ENCODE measurements at regions of chr10 and their contacts with region 1.

Region 1: GRCh38 chr10:119207367-119207668 is at the start of gene GRK5:
- DNase-seq: peak; percentile 90 to 99 (median 96)
- ATAC-seq: peak; percentile 81
- H3K4me3 ChIP-seq: peak within 1 kb of the TSS; percentile 62 to 77
- H3K4me3 Mint-ChIP-seq: peak within 1 kb of the TSS; percentile 99
- H3K27ac ChIP-seq: peak within 1 kb of the TSS; percentile 57 to 74
- H3K27ac Mint-ChIP-seq: peak within 1 kb of the TSS; percentile 95
- H3K4me1 ChIP-seq: peaks cover 36% of the 10 kb centered on the region
- H3K4me1 Mint-ChIP-seq: peaks cover 44% of the 10 kb centered on the region
- H3K27me3 ChIP-seq: no peaks in the 10 kb centered on the region
- H3K27me3 Mint-ChIP-seq: no peaks in the 10 kb centered on the region
- CTCF ChIP-seq: no peak
- total RNA-seq, gene GRK5: 15.6 to 16.2 TPM

Region 2: DNA sequence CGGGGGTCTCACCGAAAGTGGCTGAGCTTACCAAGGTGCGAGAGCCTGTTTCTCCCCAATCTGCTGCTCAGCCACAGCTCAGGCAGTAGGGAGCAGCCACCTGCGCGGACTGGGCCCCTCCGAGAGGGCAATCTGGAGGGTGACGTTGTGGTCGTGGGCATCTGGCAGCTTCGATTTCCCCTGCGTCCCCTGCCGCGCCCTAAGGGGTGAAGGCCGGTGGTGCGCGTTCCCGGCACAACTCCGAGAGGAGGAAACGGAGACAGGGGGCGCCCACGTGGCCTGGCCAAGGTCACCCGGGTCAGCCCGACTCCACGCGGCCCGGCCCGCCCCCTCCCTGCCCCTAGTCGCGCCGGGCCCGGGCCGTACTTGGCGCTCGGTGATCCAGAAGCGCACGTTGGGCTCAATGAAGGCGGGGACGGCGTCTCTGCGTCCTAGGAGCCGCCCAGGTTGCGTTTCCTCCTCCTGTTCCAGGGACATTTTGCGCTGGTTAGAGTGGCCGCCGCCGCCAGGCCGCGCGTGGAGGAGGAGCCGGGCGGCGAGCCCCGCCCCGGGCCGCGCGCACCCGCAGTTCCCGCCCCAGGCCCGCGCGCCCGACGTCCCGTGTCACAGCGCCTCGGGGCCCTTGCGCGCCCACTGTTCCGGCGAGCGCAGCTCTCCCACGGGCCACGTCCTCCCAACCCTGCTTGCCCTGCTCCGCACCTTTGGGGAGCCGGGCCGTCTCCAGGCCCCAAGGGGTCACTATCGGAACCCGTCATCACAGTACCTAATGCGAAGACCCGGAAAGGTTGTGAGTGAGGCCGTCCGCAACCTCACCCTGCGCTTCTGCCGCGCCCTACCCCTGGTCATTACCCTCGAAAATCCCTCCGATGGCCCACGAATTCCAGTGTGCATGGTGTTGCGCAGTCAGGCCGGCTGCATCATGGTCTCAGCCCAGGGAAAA is 41.9 kb before region 1 on chr10 and contains the start of gene SFXN4:
- CTCF ChIA-PET with region 1: interaction called, 6 read pairs
- POLR2A ChIA-PET with region 1: interaction called, 4 read pairs
- intact Hi-C with region 1: loop called (anchors 1 to 2 kb)
- DNase-seq: peak; percentile 59 to 89 (median 77)
- ATAC-seq: peak; percentile 93
- H3K4me3 ChIP-seq: peak within 1 kb of the TSS; percentile 49 to 80
- H3K4me3 Mint-ChIP-seq: peak within 1 kb of the TSS; percentile 95
- H3K27ac ChIP-seq: peak within 1 kb of the TSS; percentile 61 to 71
- H3K27ac Mint-ChIP-seq: peak within 1 kb of the TSS; percentile 96
- H3K4me1 ChIP-seq: peaks cover 18% of the 10 kb centered on the region
- H3K4me1 Mint-ChIP-seq: peaks cover 34% of the 10 kb centered on the region
- H3K27me3 ChIP-seq: no peaks in the 10 kb centered on the region
- H3K27me3 Mint-ChIP-seq: no peaks in the 10 kb centered on the region
- CTCF ChIP-seq: no peak
- total RNA-seq, gene SFXN4: 10.5 to 10.8 TPM

Region 3: GRCh38 chr10:119268871-119269506 is 61.7 kb after region 1 on chr10:
- CTCF ChIA-PET with region 1: interaction called, 8 read pairs
- POLR2A ChIA-PET with region 1: no interaction called
- intact Hi-C with region 1: loop called (anchors 1 kb)
- DNase-seq: peak; percentile 45 to 97 (median 75)
- ATAC-seq: peak; percentile 90
- H3K4me3 ChIP-seq: no peak overlapping the region
- H3K4me3 Mint-ChIP-seq: peak overlapping the region; percentile 33
- H3K27ac ChIP-seq: peak overlapping the region; percentile 68 to 100
- H3K27ac Mint-ChIP-seq: peak overlapping the region; percentile 97
- H3K4me1 ChIP-seq: peaks cover 42% of the 10 kb centered on the region
- H3K4me1 Mint-ChIP-seq: peaks cover 52% of the 10 kb centered on the region
- H3K27me3 ChIP-seq: no peaks in the 10 kb centered on the region
- H3K27me3 Mint-ChIP-seq: no peaks in the 10 kb centered on the region
- CTCF ChIP-seq: no peak

Region 4: DNA sequence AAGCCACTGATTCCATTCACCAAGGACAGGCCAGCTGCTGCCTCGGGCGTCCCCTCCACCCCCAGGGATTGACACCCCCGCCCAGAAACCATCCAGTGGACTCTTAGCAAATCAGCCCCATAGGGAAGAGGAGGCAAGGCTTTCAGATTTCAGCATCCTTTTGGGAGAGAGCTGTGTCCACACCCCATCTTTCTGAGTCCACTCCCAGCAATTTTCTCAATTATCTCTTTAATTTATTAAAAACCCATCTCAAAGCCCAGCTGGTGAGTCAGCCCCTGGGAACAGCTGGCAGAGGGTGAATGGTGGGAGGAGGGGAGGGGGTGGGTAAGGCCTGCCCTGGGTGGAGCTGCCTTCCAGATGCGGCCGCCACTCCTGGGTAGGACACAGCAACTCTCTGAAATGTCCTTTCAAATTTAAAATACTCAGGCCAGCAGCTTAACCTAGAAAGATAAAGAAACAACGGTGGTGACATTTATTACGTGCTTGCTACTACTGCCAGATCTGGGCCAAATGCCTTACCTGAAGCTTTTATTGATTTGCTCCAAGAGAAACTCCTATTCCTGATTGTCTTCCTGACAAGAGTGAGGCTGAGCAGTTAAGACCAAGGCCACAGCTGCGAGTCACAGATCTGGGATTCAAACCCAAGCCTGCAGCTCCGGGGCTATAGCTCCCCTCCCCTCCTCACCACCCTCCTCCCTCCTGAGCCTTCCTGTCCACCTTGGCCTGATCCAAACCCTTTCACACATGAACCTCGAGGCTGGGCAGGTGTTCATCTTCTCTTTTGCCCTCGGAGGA is 214.8 kb after region 1 on chr10:
- CTCF ChIA-PET with region 1: interaction called, 86 read pairs
- POLR2A ChIA-PET with region 1: interaction called, 9 read pairs
- intact Hi-C with region 1: loop called in 1 of 2 experiments (anchors 1 kb)
- DNase-seq: no peak
- ATAC-seq: no peak
- H3K4me3 ChIP-seq: no peak overlapping the region
- H3K4me3 Mint-ChIP-seq: no peak overlapping the region
- H3K27ac ChIP-seq: no peak overlapping the region
- H3K27ac Mint-ChIP-seq: no peak overlapping the region
- H3K4me1 ChIP-seq: no peaks in the 10 kb centered on the region
- H3K4me1 Mint-ChIP-seq: no peaks in the 10 kb centered on the region
- H3K27me3 ChIP-seq: no peaks in the 10 kb centered on the region
- H3K27me3 Mint-ChIP-seq: no peaks in the 10 kb centered on the region
- CTCF ChIP-seq: no peak

Region 5: DNA sequence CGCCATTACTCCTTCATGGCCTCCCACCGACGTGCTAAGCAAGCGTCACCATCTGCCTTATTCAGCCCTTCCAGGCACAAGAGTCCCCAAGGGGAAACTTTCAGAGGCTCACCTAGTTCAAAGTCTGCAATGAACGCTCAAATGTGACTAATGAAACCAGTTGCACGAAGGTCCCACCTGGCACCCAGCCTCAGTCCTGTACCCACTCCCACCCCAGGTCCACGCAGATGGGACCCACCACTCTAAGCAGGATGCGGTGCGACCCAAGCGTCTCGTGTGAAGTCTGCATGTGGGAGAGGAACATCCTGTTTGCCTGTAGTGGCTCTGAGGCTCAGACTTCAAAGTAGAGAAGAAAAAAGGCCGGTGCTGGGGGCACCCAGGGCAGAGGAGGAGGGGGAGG is 294.9 kb after region 1 on chr10:
- CTCF ChIA-PET with region 1: interaction called, 3 read pairs
- POLR2A ChIA-PET with region 1: interaction called, 3 read pairs
- intact Hi-C with region 1: loop called in 1 of 2 experiments (anchors 5 kb)
- DNase-seq: peak; percentile 64 to 97 (median 88)
- ATAC-seq: peak; percentile 82
- H3K4me3 ChIP-seq: peak overlapping the region; percentile 0 to 18
- H3K4me3 Mint-ChIP-seq: peak overlapping the region; percentile 79
- H3K27ac ChIP-seq: peak overlapping the region; percentile 73 to 77
- H3K27ac Mint-ChIP-seq: peak overlapping the region; percentile 99
- H3K4me1 ChIP-seq: peaks cover 94% of the 10 kb centered on the region
- H3K4me1 Mint-ChIP-seq: peaks cover 91% of the 10 kb centered on the region
- H3K27me3 ChIP-seq: no peaks in the 10 kb centered on the region
- H3K27me3 Mint-ChIP-seq: no peaks in the 10 kb centered on the region
- CTCF ChIP-seq: no peak

Region 6: DNA sequence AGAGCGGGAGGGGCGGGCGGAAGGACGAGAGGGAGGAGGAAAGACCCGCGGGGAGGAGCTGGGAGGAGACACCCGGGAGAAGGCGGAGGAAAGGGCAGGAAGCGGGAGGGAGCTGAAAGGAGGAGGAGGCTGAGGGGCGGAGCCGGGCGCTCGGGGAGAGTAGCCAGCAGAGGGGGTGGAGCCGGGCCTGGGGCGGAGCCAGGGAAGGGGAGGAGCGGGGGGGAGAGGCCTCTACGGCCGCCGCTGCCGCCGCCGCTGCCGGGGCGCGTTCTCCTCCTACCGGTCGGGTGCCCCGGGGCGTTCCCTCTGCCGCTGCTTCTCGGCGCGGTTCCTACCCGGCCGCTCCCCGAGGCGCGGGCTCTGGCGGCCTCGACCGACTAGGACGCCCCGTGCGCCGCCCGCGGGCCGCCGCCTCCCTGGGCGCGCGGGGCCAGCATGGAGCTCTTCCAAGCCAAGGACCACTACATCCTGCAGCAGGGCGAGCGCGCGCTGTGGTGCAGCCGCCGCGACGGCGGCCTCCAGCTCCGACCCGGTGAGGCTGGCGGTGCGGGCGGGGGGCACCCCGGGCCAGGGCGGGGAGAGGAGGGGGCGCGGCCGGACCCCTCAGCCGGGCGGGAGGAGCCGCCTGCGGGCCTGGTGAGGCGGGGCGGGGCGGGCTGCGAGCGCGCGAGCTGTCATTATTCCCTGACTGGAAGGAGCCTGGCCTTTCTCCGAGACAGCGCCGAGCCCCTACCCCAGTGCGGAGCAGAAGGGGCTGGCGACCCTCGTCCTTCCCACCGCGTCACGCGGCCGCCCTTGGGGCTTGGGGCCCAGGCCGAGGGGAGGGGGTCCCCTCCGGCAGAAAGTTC is 518.7 kb after region 1 on chr10 and contains the start of gene INPP5F:
- CTCF ChIA-PET with region 1: no interaction called
- POLR2A ChIA-PET with region 1: interaction called, 6 read pairs
- intact Hi-C with region 1: loop called in 1 of 2 experiments (anchors 10 kb)
- DNase-seq: peak; percentile 95 to 100 (median 98)
- ATAC-seq: peak; percentile 95
- H3K4me3 ChIP-seq: peak within 1 kb of the TSS; percentile 64 to 81
- H3K4me3 Mint-ChIP-seq: peak within 1 kb of the TSS; percentile 90
- H3K27ac ChIP-seq: peak within 1 kb of the TSS; percentile 33 to 44
- H3K27ac Mint-ChIP-seq: peak within 1 kb of the TSS; percentile 81
- H3K4me1 ChIP-seq: peaks cover 16% of the 10 kb centered on the region
- H3K4me1 Mint-ChIP-seq: peaks cover 27% of the 10 kb centered on the region
- H3K27me3 ChIP-seq: no peaks in the 10 kb centered on the region
- H3K27me3 Mint-ChIP-seq: no peaks in the 10 kb centered on the region
- CTCF ChIP-seq: no peak
- total RNA-seq, gene INPP5F: 3.8 to 6.5 TPM